Activated naive CD4-positive, alpha-beta T cell treated with anti-CD3 and anti-CD28 coated beads, Interleukin-2, amount 10 ng/mL, durations not matched to agents 7 days and 5 days (primary cell): ENCODE measurements at regions of chr10 and their contacts with region 1.

Region 1: GRCh38 chr10:69696073-69696731 is 66.2 kb downstream of the FAM241B start:
- DNase-seq: peak; percentile 41
- H3K4me3 Mint-ChIP-seq: no peak overlapping the region
- H3K27ac Mint-ChIP-seq: no peak overlapping the region
- H3K4me1 Mint-ChIP-seq: no peaks in the 10 kb centered on the region
- H3K27me3 Mint-ChIP-seq: peaks cover 9% of the 10 kb centered on the region

Region 2: DNA sequence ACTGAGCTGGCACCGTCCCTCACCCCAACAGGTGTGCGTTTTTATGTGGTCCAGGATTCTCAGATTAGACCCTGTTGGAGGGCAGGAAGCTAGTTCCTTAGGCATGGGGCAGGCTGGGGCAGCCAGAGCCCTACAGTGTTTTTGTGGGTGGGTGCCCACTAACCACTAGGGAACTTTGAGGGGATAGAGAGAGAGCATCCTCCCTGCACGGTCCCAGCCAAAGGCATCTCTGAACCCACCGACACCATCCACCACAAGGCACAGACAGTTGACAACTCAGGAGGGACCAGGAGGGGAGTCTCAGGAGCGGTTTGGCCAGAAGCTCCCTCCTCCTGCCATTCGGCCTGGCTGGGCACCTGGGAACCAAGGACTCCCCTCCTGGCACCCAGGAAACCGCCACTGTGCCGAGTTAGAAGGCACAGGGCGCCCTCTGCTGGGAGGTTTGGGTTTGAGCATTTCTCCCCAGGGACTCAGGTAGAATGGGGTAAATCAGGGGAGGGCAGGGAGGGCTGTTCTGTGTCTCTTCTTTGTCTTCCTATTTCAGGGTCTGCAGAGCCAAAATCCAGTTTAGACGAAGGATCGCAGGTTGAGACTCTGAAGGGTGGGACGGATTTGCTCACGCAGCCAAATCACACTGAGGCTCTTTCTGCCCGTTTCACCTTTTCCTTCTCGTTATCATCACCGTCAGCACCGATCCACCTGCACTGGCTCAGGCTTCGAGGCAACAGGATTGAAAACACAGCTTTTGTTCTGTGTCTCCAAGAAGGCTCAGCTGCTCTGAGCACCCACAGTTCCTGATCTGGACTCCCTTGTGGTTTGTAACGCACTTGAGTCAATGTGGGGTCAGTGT is 20.7 kb after region 1 on chr10:
- CTCF ChIA-PET with region 1: interaction called, 28 read pairs
- DNase-seq: peak; percentile 79
- H3K4me3 Mint-ChIP-seq: no peak overlapping the region
- H3K27ac Mint-ChIP-seq: no peak overlapping the region
- H3K4me1 Mint-ChIP-seq: no peaks in the 10 kb centered on the region
- H3K27me3 Mint-ChIP-seq: peaks cover 21% of the 10 kb centered on the region